Caki2 (cell line): ENCODE measurements at regions of chr17 and their contacts with region 1.

Region 1: GRCh38 chr17:43467981-43468581 is 15.7 kb upstream of the DHX8 start:
- DNase-seq: peak; percentile 94

Region 2: GRCh38 chr17:43393944-43394482 is 74.1 kb before region 1 on chr17:
- in situ Hi-C with region 1: loop called (anchors 10 kb)
- DNase-seq: peak; percentile 72

Region 3: GRCh38 chr17:43517615-43518386 is 49.7 kb after region 1 on chr17:
- in situ Hi-C with region 1: no loop called
- DNase-seq: no peak

Region 4: DNA sequence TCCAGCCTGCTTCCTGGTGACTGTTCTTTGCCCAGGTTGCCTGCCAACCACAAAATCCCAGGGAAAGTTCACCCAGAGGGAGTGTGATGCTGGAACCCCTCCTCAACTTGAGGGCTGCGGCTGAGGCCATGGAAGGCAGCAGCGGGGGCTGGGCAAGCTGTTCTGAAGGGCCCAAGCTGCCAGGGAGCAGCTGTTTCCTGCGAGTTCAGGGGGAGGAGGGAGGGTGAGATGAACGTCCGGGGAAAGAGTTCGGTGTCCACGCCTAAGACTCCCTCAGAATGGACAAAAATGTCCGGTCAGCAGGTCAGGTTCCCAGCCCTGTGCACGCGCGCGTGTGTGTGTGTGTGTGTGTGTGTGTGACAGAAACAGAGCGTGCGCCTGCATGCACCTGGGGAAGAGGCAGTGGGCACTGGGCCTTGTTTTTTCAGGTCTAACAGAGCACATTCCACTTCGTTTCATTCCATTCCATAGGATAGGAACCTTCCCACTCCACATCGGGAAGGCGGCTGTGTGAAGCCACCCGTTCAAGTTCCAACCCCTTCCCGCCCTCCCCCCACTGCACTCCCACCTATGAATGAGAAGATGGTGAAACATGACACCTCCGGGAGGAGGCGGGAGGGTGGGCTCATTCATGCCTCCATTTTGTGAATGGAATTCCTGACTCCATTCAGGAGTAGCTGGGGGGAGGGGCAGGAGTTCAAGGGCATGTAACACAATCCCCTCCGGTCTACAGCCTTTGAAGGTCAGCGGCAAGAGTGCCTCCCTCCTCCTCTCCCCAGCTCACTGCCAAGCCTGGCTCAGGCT is 62.4 kb after region 1 on chr17:
- in situ Hi-C with region 1: no loop called
- DNase-seq: peak; percentile 94

Region 5: DNA sequence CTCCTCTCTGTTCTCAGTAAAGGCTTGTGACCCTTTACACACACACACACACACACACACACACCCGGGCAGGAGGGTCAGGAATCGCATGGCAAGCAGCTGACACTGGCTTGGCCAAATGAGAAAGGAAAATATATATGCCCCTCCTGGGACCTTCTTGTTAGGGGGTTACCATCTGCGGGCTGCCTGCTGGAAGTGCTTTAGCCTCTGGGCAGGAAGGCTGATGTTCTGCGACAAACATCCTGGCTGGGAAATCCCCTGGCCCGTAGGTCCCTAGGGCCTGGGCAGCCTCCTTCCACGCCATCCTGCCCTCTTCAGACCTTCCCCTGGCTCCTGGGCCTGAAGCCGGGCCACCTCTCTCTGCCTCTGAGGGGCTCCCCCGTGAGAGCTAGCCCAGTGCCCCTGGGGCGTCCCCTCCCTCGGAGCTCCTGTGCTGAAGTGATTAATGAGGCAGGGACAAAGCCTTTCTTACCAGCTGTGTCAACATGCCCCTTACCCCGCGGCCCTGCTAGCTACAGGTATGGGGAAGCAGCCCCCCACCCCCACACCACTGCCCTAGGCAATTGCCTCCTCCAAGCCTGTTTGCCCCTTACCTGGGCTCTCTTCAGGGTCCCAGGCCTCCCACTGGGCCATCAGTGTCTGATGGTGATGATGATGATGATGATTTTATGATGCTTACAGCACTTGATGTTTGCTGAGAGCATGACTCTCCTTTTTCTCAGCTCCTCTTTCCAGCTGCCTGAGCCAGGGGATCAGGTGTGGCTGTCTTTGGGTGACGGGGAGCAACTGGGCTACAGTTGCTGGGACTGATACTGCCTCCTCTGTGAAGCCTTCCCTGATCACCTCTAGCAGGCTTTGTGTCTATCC is 110.9 kb after region 1 on chr17:
- in situ Hi-C with region 1: no loop called
- DNase-seq: peak; percentile 63